ENCODE measurements at regions of chr5 and their contacts with region 1.

Region 1: GRCh38 chr5:52915176-52915875 is 73.8 kb upstream of the ITGA2 start:
- DNase-seq: peak; percentile 63
- CTCF ChIP-seq: peak; percentile 45

Region 2: GRCh38 chr5:52693280-52693679 is 222.0 kb before region 1 on chr5:
- in situ Hi-C with region 1: loop called (anchors 25 kb)
- DNase-seq: peak; percentile 8
- CTCF ChIP-seq: peak; percentile 56

Region 3: GRCh38 chr5:53590759-53591158 is 675.4 kb after region 1 on chr5:
- in situ Hi-C with region 1: no loop called
- DNase-seq: no peak
- CTCF ChIP-seq: no peak

Measured in GM13976 (cell line).